ENCODE measurements at regions of chr3 and their contacts with region 1.

Region 1: DNA sequence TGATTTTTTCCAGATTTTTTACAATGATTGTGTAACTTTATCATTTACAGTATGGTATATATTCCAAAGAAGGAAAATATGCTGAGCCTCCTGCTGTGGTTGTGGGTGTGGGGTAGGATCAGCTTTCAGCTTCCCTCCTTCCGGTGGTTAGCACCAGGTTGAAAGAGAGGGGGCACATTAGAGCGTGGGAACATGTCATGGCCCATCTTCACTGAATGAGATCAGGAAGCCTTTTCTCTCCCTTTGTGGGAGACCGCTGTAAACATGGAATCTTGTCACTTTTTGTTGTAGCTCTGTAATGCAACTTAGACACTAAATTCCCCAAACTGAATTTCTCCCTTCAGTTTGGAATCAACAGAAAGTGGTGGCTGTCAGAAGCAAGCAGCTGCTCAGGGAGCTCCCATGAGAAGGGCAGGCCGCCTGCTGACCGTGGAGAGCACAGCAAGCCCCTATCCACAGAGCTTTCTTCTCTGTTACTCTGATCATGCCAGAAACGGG is 86.7 kb upstream of the LIMD1 start:
- DNase-seq: no peak
- H3K4me3 Mint-ChIP-seq: no peak overlapping the region
- H3K27ac Mint-ChIP-seq: no peak overlapping the region
- H3K4me1 Mint-ChIP-seq: peaks cover 8% of the 10 kb centered on the region
- H3K27me3 Mint-ChIP-seq: no peaks in the 10 kb centered on the region
- CTCF ChIP-seq: no peak

Region 2: DNA sequence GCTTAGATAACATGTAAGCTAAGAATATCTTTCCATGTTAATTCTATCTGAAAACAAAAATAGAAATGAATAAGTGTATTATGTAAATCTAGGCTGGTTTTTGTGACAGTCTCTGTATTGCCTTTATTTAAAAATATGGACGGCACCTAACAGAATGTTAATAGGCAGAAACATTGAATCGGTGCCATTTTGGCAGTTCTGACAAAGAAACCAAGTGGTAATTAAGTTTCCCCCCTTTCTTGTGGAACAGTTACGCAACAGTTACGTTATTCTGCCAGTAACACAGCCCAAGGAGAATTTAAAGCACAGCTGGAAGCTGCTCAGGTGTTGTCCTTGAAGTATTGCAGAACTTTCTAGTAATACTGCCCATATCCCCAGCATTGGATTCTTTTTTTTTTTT is 97.9 kb before region 1 on chr3:
- CTCF ChIA-PET with region 1: no interaction called
- intact Hi-C with region 1: no loop called
- DNase-seq: no peak
- H3K4me3 Mint-ChIP-seq: no peak overlapping the region
- H3K27ac Mint-ChIP-seq: no peak overlapping the region
- H3K4me1 Mint-ChIP-seq: no peaks in the 10 kb centered on the region
- H3K27me3 Mint-ChIP-seq: no peaks in the 10 kb centered on the region
- CTCF ChIP-seq: no peak

Region 3: DNA sequence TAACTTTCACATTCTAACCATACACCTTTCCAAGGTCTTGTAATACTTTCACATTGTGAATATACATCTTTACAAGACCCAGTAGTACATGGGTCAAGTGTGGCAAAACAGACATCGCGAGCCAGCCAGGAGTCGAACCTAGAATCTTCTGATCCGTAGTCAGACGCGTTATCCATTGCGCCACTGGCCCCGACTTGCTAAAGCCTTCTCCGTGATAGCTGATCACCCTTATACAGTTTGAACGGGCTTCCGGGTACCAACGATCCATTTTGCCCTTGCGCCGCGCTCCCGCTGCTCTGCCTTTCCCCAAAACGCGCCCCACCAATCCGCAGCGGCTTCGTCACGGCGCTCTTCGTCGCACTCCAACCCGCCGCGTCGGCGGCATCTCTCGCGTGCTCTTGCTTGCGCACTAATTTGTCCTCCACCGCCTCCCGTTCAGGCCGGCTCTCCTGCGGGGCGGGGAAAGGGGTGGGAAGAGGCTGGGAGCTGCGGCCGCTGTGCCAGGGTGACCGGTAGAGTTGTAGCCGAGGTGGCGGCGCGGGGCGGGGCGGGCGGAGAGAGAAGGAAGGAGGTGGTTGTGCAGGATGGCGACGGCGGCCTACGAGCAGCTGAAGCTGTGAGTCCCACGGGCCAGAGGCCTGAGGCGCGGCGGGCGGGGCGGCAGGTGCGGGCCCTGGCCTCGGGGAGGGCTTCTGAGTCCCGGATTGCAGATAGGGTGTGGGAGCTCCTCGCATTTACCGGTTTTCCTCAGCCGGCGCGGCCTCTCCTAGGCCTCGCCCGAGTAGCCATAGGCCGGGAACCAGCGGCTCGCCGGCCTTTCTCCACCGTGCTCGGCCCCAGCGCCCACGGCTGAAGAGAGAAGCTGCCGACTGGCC is 181.2 kb after region 1 on chr3 and contains the start of gene SACM1L:
- CTCF ChIA-PET with region 1: no interaction called
- intact Hi-C with region 1: loop called (anchors 1 kb)
- DNase-seq: peak; percentile 96
- H3K4me3 Mint-ChIP-seq: peak within 1 kb of the TSS; percentile 68
- H3K27ac Mint-ChIP-seq: peak within 1 kb of the TSS; percentile 99
- H3K4me1 Mint-ChIP-seq: peaks cover 36% of the 10 kb centered on the region
- H3K27me3 Mint-ChIP-seq: peaks cover 13% of the 10 kb centered on the region
- CTCF ChIP-seq: no peak
- total RNA-seq, gene SACM1L: 39.5 and 40.5 TPM in 2 replicates